Right cardiac atrium (tissue), 5 donors: ENCODE measurements at regions of chr3 and their contacts with region 1.

Region 1: DNA sequence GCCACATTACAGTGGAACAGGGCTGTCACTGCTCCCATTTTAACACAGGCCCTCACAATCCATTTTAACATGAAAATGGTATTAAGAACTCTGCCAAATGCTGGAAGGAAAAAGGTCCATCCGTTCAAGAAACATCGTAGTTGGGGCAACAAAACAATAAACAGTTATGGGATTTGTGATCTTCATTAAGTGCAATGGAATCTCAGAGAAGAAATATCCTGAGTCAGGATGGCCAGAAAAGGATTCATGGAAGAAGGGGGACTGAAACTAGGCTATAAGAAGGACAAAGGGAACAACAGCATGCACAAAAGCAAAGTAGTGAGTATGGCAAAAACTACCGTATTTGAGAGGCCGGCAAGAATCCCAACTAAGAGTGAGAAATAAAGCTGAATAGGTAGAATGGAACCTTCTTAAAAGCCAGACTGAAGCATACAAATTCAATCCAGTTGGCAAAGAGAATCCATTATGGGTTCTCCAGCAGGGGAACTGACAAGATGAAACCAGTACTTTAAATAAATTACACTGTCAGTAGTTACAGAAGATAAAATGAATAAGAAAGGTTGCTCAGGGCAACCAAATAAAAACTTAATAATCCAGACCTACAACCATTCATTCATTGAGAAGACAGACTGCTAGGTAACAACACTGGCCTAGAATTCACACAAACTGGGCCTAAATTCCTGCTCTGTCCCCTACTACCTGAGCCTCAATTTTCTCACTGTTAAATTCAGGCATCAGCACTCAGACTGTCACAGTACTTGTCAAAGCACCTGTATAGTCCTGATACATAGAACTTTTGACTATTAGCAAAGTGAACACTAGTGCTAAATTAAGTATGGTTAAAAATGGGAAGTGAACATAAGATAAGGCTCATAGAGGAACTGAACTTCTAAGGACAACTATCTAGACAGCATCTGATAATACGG is 6.3 kb downstream of the TBL1XR1 start:
- DNase-seq: no peak
- ATAC-seq: peak in 1 of 2 donors; percentile 18
- H3K4me3 ChIP-seq: no peak overlapping the region
- H3K27ac ChIP-seq: peak overlapping the region; percentile 81
- H3K4me1 ChIP-seq: peaks cover 4% of the 10 kb centered on the region
- H3K27me3 ChIP-seq: no peaks in the 10 kb centered on the region

Region 2: GRCh38 chr3:177057768-177058167 is 133.3 kb before region 1 on chr3:
- intact Hi-C with region 1: loop called (anchors 2 to 10 kb)
- DNase-seq: no peak
- ATAC-seq: no peak
- H3K4me3 ChIP-seq: no peak overlapping the region
- H3K27ac ChIP-seq: no peak overlapping the region
- H3K4me1 ChIP-seq: peaks cover 6% of the 10 kb centered on the region
- H3K27me3 ChIP-seq: no peaks in the 10 kb centered on the region

Region 3: GRCh38 chr3:177141899-177142646 is 48.9 kb before region 1 on chr3:
- intact Hi-C with region 1: loop called in 1 of 4 experiments (anchors 2 kb)
- DNase-seq: no peak
- ATAC-seq: no peak
- H3K4me3 ChIP-seq: no peak overlapping the region
- H3K27ac ChIP-seq: no peak overlapping the region
- H3K4me1 ChIP-seq: peaks cover 3% of the 10 kb centered on the region
- H3K27me3 ChIP-seq: no peaks in the 10 kb centered on the region